Right ventricle myocardium inferior (tissue), 1 donor: ENCODE measurements at regions of chr7 and their contacts with region 1.

Region 1: DNA sequence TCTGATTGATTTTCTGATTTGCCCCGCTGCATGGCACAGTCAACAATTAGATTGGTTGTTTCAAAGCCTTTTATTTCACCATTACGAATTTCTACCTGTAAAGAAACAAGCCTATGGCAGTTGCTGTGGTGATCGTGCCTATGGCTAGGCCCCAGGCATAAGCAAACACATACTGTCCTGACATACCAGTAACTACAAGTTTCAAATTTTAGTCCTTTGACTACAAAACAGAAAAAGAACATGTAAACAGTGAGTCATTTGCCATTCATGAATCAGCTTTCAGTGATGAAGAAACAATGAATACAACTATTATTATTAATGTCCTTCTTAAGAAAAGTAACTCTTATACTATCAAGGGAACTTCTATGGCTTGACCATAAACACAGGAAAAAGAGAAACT is 168.0 kb upstream of the LRRN3 start:
- DNase-seq: no peak
- ATAC-seq: no peak

Region 2: DNA sequence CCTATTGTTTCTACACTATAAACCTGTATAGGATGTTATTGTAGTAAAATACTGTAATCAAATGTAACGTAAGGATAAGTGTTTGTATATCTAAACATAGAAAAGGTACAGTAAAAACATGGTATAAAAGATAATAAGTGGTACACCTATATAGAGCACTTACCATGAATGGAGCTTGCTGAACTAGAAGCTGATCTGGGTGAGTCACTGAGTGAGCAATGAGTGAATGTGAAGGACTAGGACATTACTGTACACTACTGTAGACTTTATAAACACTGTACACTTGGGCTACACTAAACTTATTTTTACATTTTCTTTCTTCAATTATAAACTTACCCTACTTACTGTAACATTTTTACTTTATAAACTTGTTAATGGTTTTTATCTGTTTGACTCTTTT is 564.9 kb before region 1 on chr7:
- intact Hi-C with region 1: no loop called
- DNase-seq: no peak
- ATAC-seq: no peak

Region 3: GRCh38 chr7:111324228-111324627 is 401.3 kb after region 1 on chr7:
- intact Hi-C with region 1: no loop called
- DNase-seq: no peak
- ATAC-seq: no peak

Region 4: DNA sequence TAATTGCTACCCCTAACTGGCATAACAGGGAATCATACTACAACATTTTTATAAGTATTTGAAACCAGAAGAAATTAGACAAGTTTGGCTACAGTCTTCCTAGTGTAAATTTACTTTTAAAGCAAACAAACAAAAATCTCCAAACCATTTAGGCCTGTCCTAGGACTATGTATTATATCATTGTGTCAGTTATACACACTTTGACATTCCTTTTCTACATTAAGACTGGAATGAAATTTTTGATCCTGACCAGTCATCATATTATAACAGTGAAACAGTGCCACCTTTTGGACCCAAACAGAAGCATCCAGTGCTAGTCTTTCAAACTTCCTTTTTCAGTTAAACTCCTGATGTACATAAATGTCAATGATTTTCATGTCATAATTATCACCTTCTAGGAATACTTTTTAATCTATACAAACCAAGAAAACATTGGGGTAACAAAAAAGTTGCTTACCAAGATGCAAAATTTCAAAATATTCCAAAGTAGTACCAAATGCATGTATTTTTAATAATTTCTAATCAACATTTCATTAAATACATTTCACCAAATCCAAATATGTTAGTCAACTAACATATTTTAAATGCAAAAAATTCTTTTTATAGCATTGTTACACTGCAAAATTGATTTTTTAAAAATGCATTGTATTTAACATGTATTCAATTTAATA is 563.7 kb after region 1 on chr7:
- intact Hi-C with region 1: loop called (anchors 10 kb)
- DNase-seq: no peak
- ATAC-seq: no peak